Gastrocnemius medialis (tissue), 4 donors: ENCODE measurements at regions of chr9 and their contacts with region 1.

Region 1: DNA sequence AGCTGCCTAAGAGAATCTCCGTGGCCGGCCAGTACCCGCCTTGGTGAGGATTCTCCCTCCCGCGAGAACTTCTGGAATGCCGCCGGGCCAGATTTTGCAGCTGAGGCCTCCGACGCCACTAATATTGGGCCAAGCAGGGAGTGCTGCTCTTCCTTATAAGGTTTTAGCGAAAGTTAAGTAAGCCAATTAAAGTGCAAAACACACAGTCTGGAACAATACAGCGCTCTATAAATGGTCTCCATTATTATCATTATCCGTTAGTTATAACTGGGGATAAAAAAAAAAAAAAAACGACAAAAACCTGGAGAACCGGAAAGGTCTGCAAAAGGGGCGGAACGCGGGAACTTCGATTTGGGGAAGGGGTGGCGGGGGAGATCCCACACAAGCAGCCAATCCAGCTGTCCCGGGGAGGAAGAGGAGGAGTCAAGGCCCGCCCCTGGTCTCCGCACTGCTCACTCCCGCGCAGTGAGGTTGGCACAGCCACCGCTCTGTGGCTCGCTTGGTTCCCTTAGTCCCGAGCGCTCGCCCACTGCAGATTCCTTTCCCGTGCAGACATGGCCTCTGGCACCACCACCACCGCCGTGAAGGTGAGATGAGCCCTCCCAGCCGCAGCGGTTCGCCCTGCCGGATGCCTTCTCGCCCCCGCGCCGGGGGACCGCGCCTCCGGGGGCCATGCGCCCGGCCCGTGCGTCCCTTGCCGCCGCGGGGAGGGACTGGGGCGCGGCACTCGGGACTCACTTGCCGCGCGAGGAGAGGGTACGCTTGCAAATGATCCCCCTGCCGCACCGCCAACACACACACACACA is at the start of gene MTAP:
- DNase-seq: peak; percentile 83 to 84
- ATAC-seq: peak; percentile 93
- H3K4me3 ChIP-seq: peak within 1 kb of the TSS; percentile 66 to 83 (median 74)
- H3K27ac ChIP-seq: peak within 1 kb of the TSS; percentile 76 to 86 (median 78)
- H3K4me1 ChIP-seq: peaks cover 16 to 23% of the 10 kb centered on the region in 2 donors
- H3K27me3 ChIP-seq: no peaks in the 10 kb centered on the region
- CTCF ChIP-seq: no peak
- POLR2A ChIP-seq: peak; percentile 69 to 77
- total RNA-seq, gene MTAP: 6.2 to 11.0 (median 9.4) TPM

Region 2: DNA sequence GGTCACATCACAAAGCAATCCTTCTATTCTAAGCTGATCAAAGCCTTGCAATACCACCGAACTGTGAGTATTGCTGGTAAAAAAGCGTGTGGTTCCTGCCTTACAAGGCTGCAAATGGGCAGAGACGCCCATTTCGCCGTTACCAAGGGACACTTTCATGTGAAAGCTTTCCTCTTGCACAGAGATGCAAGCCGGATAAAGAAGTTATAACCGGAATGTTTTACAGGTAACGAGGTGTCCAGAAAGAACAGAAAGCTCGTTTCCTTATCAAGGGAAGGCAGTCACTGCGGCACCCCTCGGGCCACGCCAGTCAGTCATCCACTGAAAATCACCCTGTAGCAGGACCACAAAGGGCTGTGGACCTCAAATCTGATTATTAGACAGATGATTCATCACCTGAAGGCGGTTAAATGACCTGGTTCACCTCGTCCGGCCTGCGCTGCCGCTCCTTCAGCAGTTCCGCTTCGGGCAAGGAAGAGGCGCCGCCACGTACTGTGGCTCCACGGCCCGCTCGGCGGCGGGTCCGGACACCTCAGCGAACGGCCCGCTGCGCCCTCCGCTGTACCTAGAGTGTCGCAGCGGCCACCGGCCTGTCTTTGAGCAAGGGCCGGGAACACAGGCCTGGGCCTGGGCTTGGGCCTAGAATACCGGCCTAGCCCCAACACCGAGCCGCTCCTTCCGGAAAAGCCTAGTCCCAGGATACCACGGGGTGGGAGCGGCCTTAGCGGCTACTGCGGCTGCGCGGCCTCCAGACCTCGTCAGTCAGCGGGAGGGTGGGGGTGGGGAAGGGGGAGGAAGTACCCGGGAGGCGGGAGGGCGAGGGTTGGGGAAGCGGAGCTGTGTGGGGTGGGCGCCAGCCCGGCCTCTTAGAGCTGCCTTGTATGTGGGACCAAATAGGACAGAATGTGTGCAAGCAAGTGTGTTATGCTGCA is 467.4 kb before region 1 on chr9 and contains the start of gene KLHL9:
- in situ Hi-C with region 1: no loop called
- intact Hi-C with region 1: loop called (anchors 2 kb)
- DNase-seq: peak; percentile 84 to 87
- ATAC-seq: peak; percentile 97
- H3K4me3 ChIP-seq: peak within 1 kb of the TSS; percentile 68 to 96 (median 90)
- H3K27ac ChIP-seq: peak within 1 kb of the TSS; percentile 87 to 93 (median 92)
- H3K4me1 ChIP-seq: peaks cover 43 to 44% of the 10 kb centered on the region in 2 donors
- H3K27me3 ChIP-seq: no peaks in the 10 kb centered on the region
- CTCF ChIP-seq: peak in 1 of 5 experiments; percentile 13
- POLR2A ChIP-seq: peak in 1 of 2 donors; percentile 59
- total RNA-seq, gene KLHL9: 5.2 to 8.2 (median 6.5) TPM

Region 3: GRCh38 chr9:21744841-21745240 is 57.6 kb before region 1 on chr9:
- in situ Hi-C with region 1: no loop called
- intact Hi-C with region 1: loop called (anchors 10 kb)
- DNase-seq: no peak
- ATAC-seq: peak; percentile 69 to 79
- H3K4me3 ChIP-seq: no peak overlapping the region
- H3K27ac ChIP-seq: no peak overlapping the region
- H3K4me1 ChIP-seq: no peaks in the 10 kb centered on the region
- H3K27me3 ChIP-seq: no peaks in the 10 kb centered on the region
- CTCF ChIP-seq: no peak
- POLR2A ChIP-seq: no peak

Region 4: GRCh38 chr9:22119537-22120158 is 317.2 kb after region 1 on chr9:
- in situ Hi-C with region 1: loop called in 1 of 4 experiments (anchors 25 kb)
- intact Hi-C with region 1: no loop called
- DNase-seq: no peak
- ATAC-seq: peak; percentile 58 to 89
- H3K4me3 ChIP-seq: no peak overlapping the region
- H3K27ac ChIP-seq: no peak overlapping the region
- H3K4me1 ChIP-seq: no peaks in the 10 kb centered on the region
- H3K27me3 ChIP-seq: no peaks in the 10 kb centered on the region
- CTCF ChIP-seq: peak; percentile 11 to 54 (median 34)
- POLR2A ChIP-seq: no peak

Region 5: DNA sequence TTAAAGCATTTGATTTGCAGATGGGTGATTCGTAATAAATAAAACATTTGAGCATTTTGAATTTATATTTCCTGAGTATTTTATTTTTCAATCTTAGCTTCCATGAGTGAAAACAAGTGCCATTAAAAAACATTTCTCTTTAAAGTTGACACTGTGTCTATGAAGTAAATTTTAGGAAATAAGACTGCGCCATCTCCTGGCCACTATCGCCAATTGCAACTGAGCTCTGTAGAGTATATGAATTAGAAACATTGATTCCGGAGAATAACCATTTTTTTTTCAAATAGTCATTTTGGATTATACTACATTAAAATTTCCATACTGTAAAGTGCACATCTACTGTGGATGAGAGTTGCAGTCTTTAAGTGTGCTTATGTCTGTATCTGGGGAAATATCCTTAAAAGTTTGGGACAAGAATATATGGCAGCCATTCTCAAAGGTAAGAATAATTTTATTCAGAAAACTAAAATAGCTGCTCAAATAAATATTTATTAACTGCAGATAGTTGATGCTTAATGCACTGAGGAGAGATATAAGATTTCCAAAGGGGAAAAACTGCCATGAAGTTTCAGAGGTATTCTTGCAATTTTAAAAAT is 650.1 kb after region 1 on chr9:
- in situ Hi-C with region 1: loop called in 1 of 4 experiments (anchors 5 kb)
- intact Hi-C with region 1: no loop called
- DNase-seq: peak in 1 of 2 donors; percentile 20
- ATAC-seq: peak; percentile 46 to 60
- H3K4me3 ChIP-seq: no peak overlapping the region
- H3K27ac ChIP-seq: no peak overlapping the region
- H3K4me1 ChIP-seq: peaks cover 12 to 14% of the 10 kb centered on the region in 2 donors
- H3K27me3 ChIP-seq: no peaks in the 10 kb centered on the region
- CTCF ChIP-seq: peak; percentile 59 to 81 (median 72)
- POLR2A ChIP-seq: no peak